Activated CD4-positive, alpha-beta memory T cell treated with anti-CD3 and anti-CD28 coated beads for 36 hours (primary cell): ENCODE measurements at regions of chr6 and their contacts with region 1.

Region 1: DNA sequence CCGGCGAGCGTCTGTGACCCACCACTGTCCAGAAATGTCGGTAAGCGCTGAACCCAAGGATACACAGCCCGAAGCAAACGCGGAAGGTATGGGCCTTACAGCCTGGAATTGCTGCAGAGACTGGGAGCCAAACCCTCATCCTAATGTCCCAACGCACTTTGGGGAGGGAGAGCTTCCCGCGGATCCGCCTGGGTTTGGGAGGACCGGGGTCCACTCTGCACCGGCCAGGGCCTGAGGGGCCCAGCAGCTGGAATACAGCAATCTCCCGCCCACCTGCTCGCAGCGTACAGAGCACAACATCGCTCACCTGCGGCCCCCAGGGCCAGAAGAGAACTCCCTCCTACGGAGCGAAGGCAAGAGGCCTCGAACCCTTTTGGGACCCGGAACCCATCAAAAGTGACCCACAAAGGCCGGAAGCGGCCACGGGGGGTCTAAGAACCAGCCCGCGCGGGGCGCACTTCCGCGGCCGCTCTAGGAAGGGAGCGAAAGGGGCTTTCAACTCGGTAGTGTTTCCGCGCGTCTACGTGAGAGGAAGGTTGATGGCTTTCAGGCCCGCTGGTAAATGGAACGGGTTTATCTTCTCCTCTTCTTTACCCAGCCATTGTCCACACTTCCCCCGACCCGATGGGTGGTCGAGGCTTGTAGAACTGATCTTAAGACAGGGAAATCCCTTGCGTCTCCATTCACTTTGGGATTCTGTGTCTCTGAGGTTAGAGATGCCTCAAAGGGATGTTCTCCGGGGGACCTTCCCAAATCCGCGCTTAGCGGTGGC is at the start of gene ZSCAN12:
- DNase-seq: peak; percentile 90
- H3K4me3 Mint-ChIP-seq: peak within 1 kb of the TSS; percentile 85
- H3K27ac Mint-ChIP-seq: peak within 1 kb of the TSS; percentile 84
- H3K4me1 Mint-ChIP-seq: peaks cover 30% of the 10 kb centered on the region
- H3K27me3 Mint-ChIP-seq: peaks cover 24% of the 10 kb centered on the region
- total RNA-seq, gene ZSCAN12: 4.1 to 4.4 TPM

Region 2: DNA sequence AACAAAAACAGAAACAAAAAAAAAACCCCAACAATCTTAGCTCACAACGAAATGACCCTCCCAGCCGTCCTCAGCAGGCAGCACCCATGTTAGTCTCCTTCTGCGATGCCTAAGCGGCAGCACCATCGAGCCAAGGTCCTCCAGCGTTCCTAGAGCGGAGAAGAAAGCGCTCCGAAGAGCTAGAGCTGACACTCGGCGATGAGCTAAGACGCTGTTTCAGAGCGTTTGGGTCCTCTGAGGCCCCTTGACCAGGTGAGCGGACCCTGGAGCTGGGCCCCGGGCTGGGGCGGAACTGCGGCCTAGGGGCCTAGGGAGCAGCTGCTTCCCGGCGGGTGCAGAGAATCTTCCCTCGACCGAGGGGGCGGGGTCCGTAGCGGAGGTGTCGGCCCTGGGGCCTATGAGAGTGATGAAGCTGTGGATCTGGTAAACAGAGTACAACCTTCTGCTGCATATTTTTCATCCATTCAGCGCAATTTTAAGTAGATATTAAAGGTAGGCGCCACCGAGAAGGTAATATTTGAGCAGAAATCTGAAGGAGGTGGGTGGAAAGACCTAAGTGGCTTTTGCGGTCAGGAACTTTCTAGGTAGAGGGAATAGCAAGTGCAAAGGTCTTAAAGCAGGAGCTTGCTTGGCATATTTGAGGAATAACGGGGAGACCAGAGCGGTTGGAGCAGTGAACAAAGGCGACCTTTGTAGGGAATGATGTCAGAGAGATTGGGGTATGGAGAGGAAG is 132.4 kb before region 1 on chr6 and contains the start of gene ZSCAN26:
- CTCF ChIA-PET with region 1: no interaction called
- POLR2A ChIA-PET with region 1: no interaction called
- intact Hi-C with region 1: loop called (anchors 5 kb)
- DNase-seq: peak; percentile 89
- H3K4me3 Mint-ChIP-seq: no peak within 1 kb of the TSS
- H3K27ac Mint-ChIP-seq: no peak within 1 kb of the TSS
- H3K4me1 Mint-ChIP-seq: peaks cover 36% of the 10 kb centered on the region
- H3K27me3 Mint-ChIP-seq: no peaks in the 10 kb centered on the region
- total RNA-seq, gene ZSCAN26: 6.0 to 6.4 TPM

Region 3: GRCh38 chr6:28443112-28443773 is 43.7 kb after region 1 on chr6 and contains the start of gene ZSCAN23:
- CTCF ChIA-PET with region 1: no interaction called
- POLR2A ChIA-PET with region 1: no interaction called
- intact Hi-C with region 1: loop called (anchors 1 kb)
- DNase-seq: peak; percentile 92
- H3K4me3 Mint-ChIP-seq: peak within 1 kb of the TSS; percentile 97
- H3K27ac Mint-ChIP-seq: peak within 1 kb of the TSS; percentile 79
- H3K4me1 Mint-ChIP-seq: peaks cover 29% of the 10 kb centered on the region
- H3K27me3 Mint-ChIP-seq: peaks cover 39% of the 10 kb centered on the region
- total RNA-seq, gene ZSCAN23: 0.83 to 1.1 TPM

Region 4: DNA sequence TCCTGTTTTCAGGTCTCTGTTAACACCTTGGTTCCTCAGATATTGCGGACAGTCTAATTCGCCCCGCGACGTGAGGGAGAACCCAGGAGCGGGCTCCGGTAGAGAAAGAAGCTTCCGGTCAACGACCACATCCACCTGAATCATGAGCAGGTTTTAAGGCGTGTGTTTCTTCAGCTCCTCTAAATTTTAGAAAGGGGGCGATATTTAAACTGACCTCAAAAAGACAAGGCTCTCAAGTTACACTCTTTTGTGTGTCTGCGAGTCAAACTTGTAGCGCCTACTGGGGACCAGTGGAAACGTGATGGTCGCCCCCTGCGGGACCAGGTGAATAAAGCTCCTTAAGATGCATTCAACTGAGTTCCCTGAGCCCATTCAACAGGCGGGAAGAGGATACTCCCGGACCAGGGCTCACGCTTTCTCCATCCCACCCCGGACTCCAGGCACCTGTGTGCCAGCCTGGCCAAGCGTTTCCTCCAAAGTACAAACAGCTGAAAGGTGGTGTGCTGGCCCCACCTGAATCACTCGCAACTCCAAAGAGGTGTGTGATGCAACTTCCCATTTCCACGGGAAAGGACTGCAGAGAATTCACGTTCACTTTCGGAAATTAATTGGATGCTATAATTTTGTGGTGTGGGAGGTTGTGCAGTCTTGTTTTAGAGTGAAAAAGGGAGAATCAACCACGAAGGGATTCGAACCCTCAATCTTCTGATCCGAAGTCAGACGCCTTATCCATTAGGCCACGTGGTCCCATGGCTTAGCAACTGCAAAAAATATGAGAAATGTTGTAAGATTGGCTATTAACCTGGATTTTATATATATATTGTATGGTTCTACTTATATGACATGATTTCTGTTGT is 143.1 kb after region 1 on chr6:
- CTCF ChIA-PET with region 1: no interaction called
- POLR2A ChIA-PET with region 1: no interaction called
- intact Hi-C with region 1: loop called (anchors 5 kb)
- DNase-seq: peak; percentile 75
- H3K4me3 Mint-ChIP-seq: peak overlapping the region; percentile 79
- H3K27ac Mint-ChIP-seq: peak overlapping the region; percentile 60
- H3K4me1 Mint-ChIP-seq: peaks cover 19% of the 10 kb centered on the region
- H3K27me3 Mint-ChIP-seq: peaks cover 29% of the 10 kb centered on the region